GM23248 (cell line): ENCODE measurements at regions of chr2 and their contacts with region 1.

Region 1: GRCh38 chr2:164737612-164738081 is 104.0 kb downstream of the COBLL1 start:
- DNase-seq: peak; percentile 80
- H3K4me3 ChIP-seq: no peak overlapping the region; the same call in 1 of the 2 replicates
- H3K27ac ChIP-seq: no peak overlapping the region
- H3K4me1 ChIP-seq: peaks cover 20% of the 10 kb centered on the region
- H3K27me3 ChIP-seq: no peaks in the 10 kb centered on the region

Region 2: DNA sequence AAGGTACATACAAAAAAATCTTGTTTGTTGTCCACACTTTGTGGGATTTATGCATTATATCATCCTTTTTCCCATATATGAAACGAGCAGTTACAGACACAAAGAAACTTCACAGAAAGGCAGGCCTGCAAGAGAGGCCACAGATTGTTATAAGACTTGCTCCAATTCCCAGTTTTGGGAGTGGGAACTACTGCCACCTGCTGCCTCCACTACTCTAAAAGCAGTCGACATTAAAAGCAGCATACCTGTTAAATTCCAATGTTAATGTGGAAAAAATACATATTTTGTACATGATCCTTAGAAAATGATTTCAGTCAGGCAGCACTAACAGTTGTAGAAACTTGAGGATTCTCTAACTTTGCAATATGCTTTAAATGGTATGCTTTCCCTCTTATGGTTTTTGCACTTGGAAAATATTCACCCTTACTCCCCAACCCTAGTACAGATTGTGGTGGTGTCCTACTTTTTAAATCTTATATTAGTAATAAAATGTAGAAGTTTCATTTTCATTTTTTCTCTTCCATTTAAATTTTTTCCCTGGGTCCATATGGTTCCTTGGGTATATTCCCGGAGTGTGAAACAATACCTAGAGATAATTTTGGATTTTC is 179.8 kb after region 1 on chr2:
- in situ Hi-C with region 1: loop called (anchors 25 kb)
- DNase-seq: peak; percentile 33
- H3K4me3 ChIP-seq: no peak overlapping the region
- H3K27ac ChIP-seq: no peak overlapping the region
- H3K4me1 ChIP-seq: peaks cover 30% of the 10 kb centered on the region
- H3K27me3 ChIP-seq: no peaks in the 10 kb centered on the region

Region 3: GRCh38 chr2:164981217-164981990 is 243.8 kb after region 1 on chr2:
- in situ Hi-C with region 1: loop called (anchors 10 kb)
- DNase-seq: peak; percentile 58
- H3K4me3 ChIP-seq: no peak overlapping the region
- H3K27ac ChIP-seq: peak overlapping the region; percentile 42
- H3K4me1 ChIP-seq: peaks cover 49% of the 10 kb centered on the region
- H3K27me3 ChIP-seq: no peaks in the 10 kb centered on the region

Region 4: DNA sequence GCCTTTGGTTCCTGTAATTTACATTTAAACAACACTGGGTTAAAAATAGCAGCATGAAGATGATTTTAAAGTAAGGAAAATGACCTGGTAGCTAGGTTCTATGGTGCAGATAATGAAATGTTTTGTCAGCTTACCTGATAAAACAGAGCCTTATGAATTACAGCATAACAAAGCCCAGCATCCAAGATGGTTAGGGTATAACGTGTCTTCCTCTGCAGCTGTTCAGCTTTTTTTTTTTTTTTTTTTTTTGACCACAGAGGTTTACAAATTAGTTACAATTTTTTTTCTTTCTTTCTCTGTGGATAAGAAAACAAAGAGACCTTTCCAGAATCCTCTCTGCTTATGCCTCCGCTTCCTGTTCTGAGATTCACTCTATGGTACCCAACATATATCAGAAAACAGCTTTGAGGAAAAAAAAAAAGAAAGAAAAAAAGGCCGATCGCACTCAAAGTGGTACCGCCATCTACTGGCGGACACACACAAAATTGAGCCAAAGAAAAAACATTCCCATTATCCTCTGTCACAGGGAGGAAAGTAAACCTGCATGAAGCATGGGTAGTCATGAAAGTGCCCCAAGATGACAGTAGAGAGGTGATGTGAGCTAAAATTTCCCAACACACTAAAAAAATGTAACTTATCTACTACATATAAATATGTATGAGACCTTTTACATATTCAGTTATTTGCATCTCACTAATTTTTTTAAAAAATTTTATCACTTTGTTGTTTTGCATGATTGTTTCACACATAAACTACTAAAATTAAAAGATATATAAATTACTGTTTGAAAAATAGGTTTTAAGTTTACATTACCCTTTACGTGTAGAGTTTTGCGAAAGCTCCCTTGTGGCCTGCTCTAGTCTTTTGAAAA is 466.3 kb after region 1 on chr2 and contains the start of gene SCN3A:
- in situ Hi-C with region 1: loop called (anchors 10 kb)
- DNase-seq: peak; percentile 69
- H3K4me3 ChIP-seq: no peak within 1 kb of the TSS
- H3K27ac ChIP-seq: no peak within 1 kb of the TSS
- H3K4me1 ChIP-seq: no peaks in the 10 kb centered on the region
- H3K27me3 ChIP-seq: no peaks in the 10 kb centered on the region
- total RNA-seq, gene SCN3A: 0.11 TPM in 1 of 2 replicates, not detected in the other